GM12878 (cell line): ENCODE measurements at regions of chr1 and their contacts with region 1.

Region 1: DNA sequence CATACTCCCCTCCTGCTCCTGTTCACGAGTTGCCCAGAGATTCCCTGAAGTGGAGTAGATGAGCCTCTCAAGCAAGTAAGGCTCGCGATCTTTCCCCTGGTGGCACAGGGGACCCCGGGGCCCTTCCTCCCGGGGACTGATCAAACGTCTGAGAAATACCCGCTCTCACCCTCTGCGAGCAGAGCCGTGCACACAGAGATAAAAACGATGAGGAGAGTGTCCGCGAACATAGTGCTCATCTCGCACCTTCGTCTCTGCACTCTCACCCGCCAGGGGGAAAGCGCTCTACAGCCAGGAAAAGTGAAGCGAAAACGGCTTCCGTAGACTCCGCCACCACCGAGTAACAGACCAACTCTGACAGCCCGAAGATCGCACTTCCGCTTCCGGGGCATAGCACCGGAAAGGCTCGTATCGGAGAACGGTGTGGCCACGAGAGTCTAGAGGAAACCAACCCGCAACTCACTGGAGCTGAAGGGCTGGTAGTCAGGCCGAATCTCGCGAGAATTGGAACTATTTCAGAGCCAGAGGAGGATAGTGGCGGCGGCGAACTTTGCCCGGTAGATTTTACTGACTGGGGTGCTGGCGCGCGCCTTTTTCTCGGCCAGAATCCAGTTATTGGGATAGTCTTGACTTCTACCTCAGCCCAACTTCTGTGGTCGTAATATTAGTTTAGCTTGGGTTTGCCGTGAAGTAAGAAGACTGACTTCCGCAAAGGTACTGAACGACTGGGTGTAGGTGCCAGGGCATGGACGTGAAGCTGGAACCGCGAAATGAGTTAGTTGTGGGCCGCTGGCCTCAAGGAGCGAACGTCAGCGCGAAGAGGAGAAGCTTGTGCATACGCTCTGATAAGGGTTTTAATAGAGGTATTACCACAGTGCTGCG is at the start of gene TMCO1:
- DNase-seq: peak; percentile 93
- ATAC-seq: peak; percentile 98
- H3K4me3 ChIP-seq: peak within 1 kb of the TSS; percentile 79
- H3K27ac ChIP-seq: peak within 1 kb of the TSS; percentile 92
- H3K4me1 ChIP-seq: peaks cover 10% of the 10 kb centered on the region; the same call in 1 of the 2 replicates
- H3K27me3 ChIP-seq: no peaks in the 10 kb centered on the region
- CTCF ChIP-seq: peak in 2 of 3 experiments; percentile 15 to 16; a peak in 2 of 6 replicates
- EP300 ChIP-seq: no peak
- POLR2A ChIP-seq: peak; percentile 90
- RAD21 ChIP-seq: peak; percentile 35; the same call in 1 of the 2 replicates
- polyA plus RNA-seq, gene TMCO1: 184 to 253 TPM

Region 2: GRCh38 chr1:165630629-165631341 is 138.0 kb before region 1 on chr1 and contains the start of gene MGST3:
- CTCF ChIA-PET with region 1: no interaction called
- POLR2A ChIA-PET with region 1: no interaction called
- RAD21 ChIA-PET with region 1: no interaction called
- SMC1A ChIA-PET with region 1: no interaction called
- in situ Hi-C with region 1: no loop called
- intact Hi-C with region 1: no loop called
- DNase-seq: peak; percentile 91
- ATAC-seq: peak; percentile 95
- H3K4me3 ChIP-seq: peak within 1 kb of the TSS; percentile 87
- H3K27ac ChIP-seq: peak within 1 kb of the TSS; percentile 92
- H3K4me1 ChIP-seq: peaks cover 20% of the 10 kb centered on the region
- H3K27me3 ChIP-seq: no peaks in the 10 kb centered on the region
- CTCF ChIP-seq: no peak
- EP300 ChIP-seq: 0 out of 4 replicates have a peak, but pooled peaks of 1 of the 2 experiments have one; percentile 24
- POLR2A ChIP-seq: peak; percentile 69
- RAD21 ChIP-seq: no peak
- polyA plus RNA-seq, gene MGST3: 137 to 145 TPM

Region 3: GRCh38 chr1:165697881-165698760 is 70.6 kb before region 1 on chr1 and contains the start of gene ALDH9A1:
- CTCF ChIA-PET with region 1: interaction called, 6 read pairs
- POLR2A ChIA-PET with region 1: interaction called, 3 read pairs
- RAD21 ChIA-PET with region 1: interaction called, 5 read pairs
- SMC1A ChIA-PET with region 1: interaction called, 11 read pairs
- in situ Hi-C with region 1: no loop called
- intact Hi-C with region 1: no loop called
- DNase-seq: peak; percentile 41
- ATAC-seq: peak; percentile 95
- H3K4me3 ChIP-seq: peak within 1 kb of the TSS; percentile 73
- H3K27ac ChIP-seq: peak within 1 kb of the TSS; percentile 93
- H3K4me1 ChIP-seq: no peaks in the 10 kb centered on the region; the same call in 1 of the 2 replicates
- H3K27me3 ChIP-seq: no peaks in the 10 kb centered on the region
- CTCF ChIP-seq: peak in 2 of 3 experiments; percentile 19 to 28; a peak in 1 of 6 replicates
- EP300 ChIP-seq: no peak
- POLR2A ChIP-seq: peak; percentile 95
- RAD21 ChIP-seq: no peak
- polyA plus RNA-seq, gene ALDH9A1: 25.7 to 35.6 TPM

Region 4: GRCh38 chr1:165857046-165857801 is 88.5 kb after region 1 on chr1:
- CTCF ChIA-PET with region 1: interaction called, 3 read pairs
- POLR2A ChIA-PET with region 1: no interaction called
- RAD21 ChIA-PET with region 1: interaction called, 12 read pairs
- SMC1A ChIA-PET with region 1: interaction called, 5 read pairs
- in situ Hi-C with region 1: no loop called
- intact Hi-C with region 1: no loop called
- DNase-seq: no peak
- ATAC-seq: peak; percentile 90
- H3K4me3 ChIP-seq: no peak overlapping the region
- H3K27ac ChIP-seq: peak overlapping the region; percentile 38; the same call in 1 of the 2 replicates
- H3K4me1 ChIP-seq: peaks cover 32% of the 10 kb centered on the region
- H3K27me3 ChIP-seq: no peaks in the 10 kb centered on the region
- CTCF ChIP-seq: no peak
- EP300 ChIP-seq: peak in 1 of 2 experiments; percentile 7; a peak in 1 of 4 replicates
- POLR2A ChIP-seq: no peak
- RAD21 ChIP-seq: no peak

Region 5: GRCh38 chr1:165877940-165878556 is 109.3 kb after region 1 on chr1:
- CTCF ChIA-PET with region 1: no interaction called
- POLR2A ChIA-PET with region 1: interaction called, 3 read pairs
- RAD21 ChIA-PET with region 1: interaction called, 3 read pairs
- SMC1A ChIA-PET with region 1: interaction called, 3 read pairs
- in situ Hi-C with region 1: no loop called
- intact Hi-C with region 1: loop called (anchors 5 kb)
- DNase-seq: peak; percentile 67
- ATAC-seq: peak; percentile 78
- H3K4me3 ChIP-seq: no peak overlapping the region
- H3K27ac ChIP-seq: peak overlapping the region; percentile 69
- H3K4me1 ChIP-seq: peaks cover 53% of the 10 kb centered on the region
- H3K27me3 ChIP-seq: no peaks in the 10 kb centered on the region
- CTCF ChIP-seq: no peak
- EP300 ChIP-seq: peak; percentile 82 to 84; a peak in 3 of 4 replicates
- POLR2A ChIP-seq: no peak
- RAD21 ChIP-seq: 0 out of 2 replicates have a peak, but pooled peaks have one; percentile 11